ENCODE measurements at regions of chr3 and their contacts with region 1.

Region 1: DNA sequence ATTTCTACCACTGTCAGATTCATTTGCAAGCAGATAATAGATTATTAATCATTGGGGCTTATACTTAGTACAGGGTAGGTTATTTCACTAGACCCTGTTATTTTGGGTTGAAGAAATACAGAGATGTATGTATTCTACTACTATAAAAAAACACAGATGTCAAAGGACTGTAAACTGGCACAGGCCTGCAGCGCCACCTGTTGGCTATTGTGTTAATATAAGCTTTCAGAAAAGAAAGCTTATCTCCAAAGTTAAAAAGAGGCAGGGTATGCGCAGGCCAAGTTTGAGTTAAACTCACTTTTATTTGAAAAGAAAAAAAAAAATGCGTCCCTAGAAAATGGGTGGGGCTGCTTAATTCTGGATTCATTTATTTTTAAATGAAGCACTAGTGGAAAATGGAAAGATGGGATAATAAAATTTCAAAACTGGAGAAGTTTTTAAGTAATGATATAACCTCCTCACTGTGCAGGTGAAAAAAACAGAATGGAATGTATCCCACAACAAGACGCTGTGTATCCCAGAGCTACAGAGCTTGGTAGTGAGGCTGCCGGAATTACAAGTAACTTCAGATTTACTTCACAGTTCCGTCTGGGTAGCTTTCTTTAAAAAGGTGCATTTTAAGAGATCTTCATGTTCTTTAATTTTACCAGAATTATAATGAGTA is 407.2 kb upstream of the TGFBR2 start:
- DNase-seq: peak; percentile 16
- ATAC-seq: peak; percentile 31
- H3K4me3 Mint-ChIP-seq: no peak overlapping the region
- H3K27ac Mint-ChIP-seq: no peak overlapping the region
- H3K4me1 Mint-ChIP-seq: peaks cover 12% of the 10 kb centered on the region
- H3K27me3 Mint-ChIP-seq: no peaks in the 10 kb centered on the region
- CTCF ChIP-seq: peak; percentile 73

Region 2: DNA sequence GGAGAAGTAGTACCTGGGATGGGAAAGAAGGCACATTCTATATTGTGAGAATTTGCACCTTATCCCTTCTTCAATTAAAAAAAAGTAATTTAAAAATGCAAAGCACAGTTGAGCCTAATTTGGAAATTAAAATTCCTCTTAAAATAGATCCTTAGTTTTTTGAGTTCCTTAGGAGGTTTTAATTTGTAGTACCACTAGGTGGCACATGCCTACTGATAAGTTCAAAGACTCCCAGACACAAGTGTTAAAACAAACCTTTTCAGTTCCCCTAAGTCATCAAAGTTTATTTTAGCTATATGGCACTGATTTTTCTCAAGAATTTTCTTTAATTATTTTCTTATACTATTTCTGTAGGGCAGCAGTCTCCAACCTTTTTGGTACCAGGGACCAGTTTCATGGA is 1723.0 kb before region 1 on chr3:
- CTCF ChIA-PET with region 1: no interaction called
- POLR2A ChIA-PET with region 1: no interaction called
- intact Hi-C with region 1: loop called (anchors 5 kb)
- DNase-seq: no peak
- ATAC-seq: no peak
- H3K4me3 Mint-ChIP-seq: no peak overlapping the region
- H3K27ac Mint-ChIP-seq: no peak overlapping the region
- H3K4me1 Mint-ChIP-seq: no peaks in the 10 kb centered on the region
- H3K27me3 Mint-ChIP-seq: no peaks in the 10 kb centered on the region
- CTCF ChIP-seq: no peak

Region 3: GRCh38 chr3:29426302-29427226 is 772.7 kb before region 1 on chr3:
- CTCF ChIA-PET with region 1: no interaction called
- POLR2A ChIA-PET with region 1: no interaction called
- intact Hi-C with region 1: no loop called
- DNase-seq: no peak
- ATAC-seq: no peak
- H3K4me3 Mint-ChIP-seq: no peak overlapping the region
- H3K27ac Mint-ChIP-seq: no peak overlapping the region
- H3K4me1 Mint-ChIP-seq: no peaks in the 10 kb centered on the region
- H3K27me3 Mint-ChIP-seq: no peaks in the 10 kb centered on the region
- CTCF ChIP-seq: no peak

Region 4: DNA sequence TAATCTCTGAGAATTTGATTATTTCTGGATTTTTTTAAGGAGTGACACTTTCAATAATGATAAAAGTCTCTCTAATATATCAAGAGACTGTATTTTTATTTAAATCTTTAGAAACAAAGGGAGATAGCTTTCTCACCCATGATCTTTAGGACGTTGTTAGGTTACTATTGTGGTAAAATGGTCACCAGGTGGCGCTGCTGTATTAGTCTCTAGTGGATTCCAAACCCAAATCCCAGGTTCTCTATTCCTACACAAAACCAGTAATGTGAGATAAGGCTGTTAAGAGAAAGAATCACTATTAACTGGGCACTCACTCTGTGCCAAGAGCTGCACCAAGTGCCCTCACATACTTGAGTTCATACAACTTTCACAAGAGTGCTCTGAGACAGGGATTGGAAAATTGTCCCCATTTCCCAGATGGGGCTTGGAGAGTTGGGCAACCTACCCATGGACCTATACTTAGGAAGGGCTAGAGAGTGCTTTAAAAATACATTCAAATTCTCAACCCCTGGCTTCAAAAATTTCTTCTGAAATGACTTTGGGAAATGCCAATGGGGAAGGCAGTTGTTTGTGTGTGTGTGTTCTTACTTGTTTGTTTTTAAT is 186.2 kb before region 1 on chr3:
- CTCF ChIA-PET with region 1: interaction called, 18 read pairs
- POLR2A ChIA-PET with region 1: no interaction called
- intact Hi-C with region 1: loop called (anchors 1 kb)
- DNase-seq: no peak
- ATAC-seq: no peak
- H3K4me3 Mint-ChIP-seq: no peak overlapping the region
- H3K27ac Mint-ChIP-seq: no peak overlapping the region
- H3K4me1 Mint-ChIP-seq: no peaks in the 10 kb centered on the region
- H3K27me3 Mint-ChIP-seq: peaks cover 2% of the 10 kb centered on the region
- CTCF ChIP-seq: no peak

Region 5: GRCh38 chr3:30059240-30059639 is 140.0 kb before region 1 on chr3:
- CTCF ChIA-PET with region 1: no interaction called
- POLR2A ChIA-PET with region 1: no interaction called
- intact Hi-C with region 1: no loop called
- DNase-seq: no peak
- ATAC-seq: no peak
- H3K4me3 Mint-ChIP-seq: no peak overlapping the region
- H3K27ac Mint-ChIP-seq: no peak overlapping the region
- H3K4me1 Mint-ChIP-seq: no peaks in the 10 kb centered on the region
- H3K27me3 Mint-ChIP-seq: no peaks in the 10 kb centered on the region
- CTCF ChIP-seq: no peak

Region 6: DNA sequence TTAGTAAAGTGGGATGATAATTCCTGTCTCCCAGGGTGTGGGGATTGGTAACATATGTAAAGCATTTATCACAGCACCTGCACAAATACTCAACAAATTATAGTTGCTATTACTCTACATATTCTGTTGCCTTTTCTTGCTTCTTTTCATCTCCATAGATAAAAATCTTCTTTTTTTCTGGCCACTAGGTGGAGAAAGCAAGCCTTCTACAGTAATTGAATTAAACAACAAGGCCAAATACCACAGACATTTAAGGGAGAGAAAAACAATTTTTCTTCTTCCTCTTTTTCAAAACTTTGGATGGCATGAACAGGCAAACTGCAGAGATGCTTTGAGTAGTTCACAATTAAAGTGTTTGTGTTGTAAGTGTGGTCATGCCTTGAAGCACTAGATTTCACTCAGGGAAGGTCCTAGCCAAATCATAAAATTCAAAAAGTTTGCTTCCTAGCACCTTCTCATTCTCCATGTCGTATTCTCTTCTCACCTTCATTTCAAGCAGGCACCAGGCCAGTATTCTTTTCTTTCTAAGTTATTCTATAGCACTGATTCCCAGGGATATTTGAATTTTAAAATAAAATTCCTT is 86.2 kb before region 1 on chr3:
- CTCF ChIA-PET with region 1: interaction called, 24 read pairs
- POLR2A ChIA-PET with region 1: no interaction called
- intact Hi-C with region 1: loop called (anchors 1 kb)
- DNase-seq: no peak
- ATAC-seq: no peak
- H3K4me3 Mint-ChIP-seq: no peak overlapping the region
- H3K27ac Mint-ChIP-seq: no peak overlapping the region
- H3K4me1 Mint-ChIP-seq: peaks cover 10% of the 10 kb centered on the region
- H3K27me3 Mint-ChIP-seq: no peaks in the 10 kb centered on the region
- CTCF ChIP-seq: no peak

Region 7: DNA sequence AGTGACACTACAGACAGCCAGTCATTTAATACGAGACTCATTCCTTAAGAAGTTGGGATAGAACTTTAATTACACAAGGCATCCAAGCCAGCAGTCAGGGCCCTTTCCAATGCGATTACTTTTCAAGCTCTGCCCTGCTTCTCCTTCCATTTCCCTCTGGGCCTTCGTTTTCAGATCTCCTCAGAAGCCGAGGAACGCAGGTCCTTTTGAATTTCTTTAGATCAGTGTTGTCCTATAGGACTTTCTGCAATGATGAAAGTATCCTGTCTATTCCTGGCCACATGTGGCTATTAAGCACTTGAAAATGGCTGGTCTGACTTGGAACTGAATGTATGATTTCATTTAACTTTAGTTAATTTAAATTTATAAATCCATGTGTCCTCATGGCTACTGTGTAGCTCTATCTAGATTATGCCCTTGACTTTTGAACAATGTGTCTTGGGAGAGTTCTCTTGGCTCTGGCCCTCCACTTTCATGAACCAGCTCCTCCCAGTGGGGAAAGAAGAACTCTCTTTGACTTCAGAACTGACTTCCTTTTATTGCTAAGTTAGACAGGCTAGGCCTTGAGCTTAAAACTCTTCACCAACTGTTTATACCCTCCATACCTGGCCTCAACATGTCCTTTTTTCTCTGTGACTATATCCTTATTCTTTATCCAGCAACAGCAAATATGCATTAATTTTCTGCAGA is 429.8 kb after region 1 on chr3:
- CTCF ChIA-PET with region 1: interaction called, 20 read pairs
- POLR2A ChIA-PET with region 1: no interaction called
- intact Hi-C with region 1: loop called (anchors 5 kb)
- DNase-seq: no peak
- ATAC-seq: peak; percentile 52
- H3K4me3 Mint-ChIP-seq: peak overlapping the region; percentile 49
- H3K27ac Mint-ChIP-seq: peak overlapping the region; percentile 91
- H3K4me1 Mint-ChIP-seq: peaks cover 94% of the 10 kb centered on the region
- H3K27me3 Mint-ChIP-seq: no peaks in the 10 kb centered on the region
- CTCF ChIP-seq: no peak

Region 8: GRCh38 chr3:30644593-30645012 is 445.4 kb after region 1 on chr3:
- CTCF ChIA-PET with region 1: interaction called, 12 read pairs
- POLR2A ChIA-PET with region 1: no interaction called
- intact Hi-C with region 1: no loop called
- DNase-seq: no peak
- ATAC-seq: peak; percentile 38
- H3K4me3 Mint-ChIP-seq: peak overlapping the region; percentile 68
- H3K27ac Mint-ChIP-seq: peak overlapping the region; percentile 91
- H3K4me1 Mint-ChIP-seq: peaks cover 98% of the 10 kb centered on the region
- H3K27me3 Mint-ChIP-seq: no peaks in the 10 kb centered on the region
- CTCF ChIP-seq: no peak

Region 9: DNA sequence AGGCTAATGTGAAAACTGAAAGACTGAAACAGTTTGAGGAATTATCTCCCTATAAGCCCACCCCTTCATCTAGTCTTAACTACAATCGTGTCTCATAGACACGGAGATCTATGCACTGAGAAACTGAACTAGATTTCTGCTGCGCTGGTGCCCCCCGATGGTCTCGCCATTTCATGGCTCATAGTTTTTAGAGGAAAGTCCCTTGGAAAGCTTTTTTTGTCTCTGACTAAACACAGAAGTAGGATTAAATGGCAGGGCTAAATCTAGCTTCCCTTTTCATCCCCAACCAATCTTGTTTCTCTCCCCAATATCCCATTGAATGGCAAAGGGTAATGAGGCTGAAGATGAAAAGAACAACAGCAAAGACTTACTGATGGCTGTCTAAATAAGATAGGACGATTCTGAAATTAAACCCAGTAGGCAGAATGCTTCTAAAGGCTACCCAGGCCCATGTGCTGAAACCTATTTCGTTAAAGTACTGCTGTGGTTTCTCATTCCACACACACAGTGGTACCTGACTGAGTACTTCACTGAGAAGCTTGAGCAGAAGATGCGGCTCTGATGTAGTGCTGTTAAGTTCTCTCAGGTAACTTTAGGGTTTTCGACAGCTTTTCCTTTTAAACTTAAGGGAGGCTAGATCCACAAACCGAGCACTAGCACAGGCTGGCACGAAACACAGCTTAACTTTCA is 552.5 kb after region 1 on chr3:
- CTCF ChIA-PET with region 1: no interaction called
- POLR2A ChIA-PET with region 1: no interaction called
- intact Hi-C with region 1: loop called (anchors 5 kb)
- DNase-seq: peak; percentile 20
- ATAC-seq: peak; percentile 72
- H3K4me3 Mint-ChIP-seq: no peak overlapping the region
- H3K27ac Mint-ChIP-seq: no peak overlapping the region
- H3K4me1 Mint-ChIP-seq: peaks cover 9% of the 10 kb centered on the region
- H3K27me3 Mint-ChIP-seq: peaks cover 7% of the 10 kb centered on the region
- CTCF ChIP-seq: no peak

Measured in activated B cell treated with CpG ODN at 0.5 μM for 24 hours (primary cell).